Posterior vena cava (tissue), 2 donors: ENCODE measurements at regions of chr19 and their contacts with region 1.

Region 1: GRCh38 chr19:19145684-19146608 is 7.7 kb upstream of the TMEM161A start:
- DNase-seq: peak; percentile 93

Region 2: DNA sequence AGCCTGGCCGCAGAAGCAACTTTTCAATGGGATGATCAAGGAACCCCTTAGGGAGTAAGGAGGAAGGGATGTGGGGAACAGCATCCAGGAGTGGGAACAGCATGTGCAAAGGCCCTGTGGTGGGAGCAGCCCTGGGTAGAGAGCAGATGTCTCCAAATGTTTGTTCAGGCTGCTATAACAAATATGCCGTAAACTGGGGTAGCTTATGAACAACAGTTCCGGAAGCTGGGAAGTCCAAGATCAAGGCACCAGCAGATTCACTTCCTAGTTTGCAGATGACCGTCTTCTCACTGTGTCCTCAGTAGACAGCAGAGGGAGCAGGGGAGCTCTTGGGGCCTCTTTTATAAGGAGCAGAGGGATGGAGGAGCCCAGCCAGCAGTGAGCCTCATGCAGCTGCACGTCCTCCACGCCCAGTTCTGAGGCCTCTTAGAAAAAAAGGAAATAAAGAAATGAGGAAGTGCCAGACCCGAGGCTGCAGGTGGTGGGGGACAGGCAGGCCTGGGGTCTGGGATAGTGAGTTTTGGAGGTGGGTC is 744.3 kb before region 1 on chr19:
- intact Hi-C with region 1: no loop called
- DNase-seq: peak; percentile 92

Region 3: DNA sequence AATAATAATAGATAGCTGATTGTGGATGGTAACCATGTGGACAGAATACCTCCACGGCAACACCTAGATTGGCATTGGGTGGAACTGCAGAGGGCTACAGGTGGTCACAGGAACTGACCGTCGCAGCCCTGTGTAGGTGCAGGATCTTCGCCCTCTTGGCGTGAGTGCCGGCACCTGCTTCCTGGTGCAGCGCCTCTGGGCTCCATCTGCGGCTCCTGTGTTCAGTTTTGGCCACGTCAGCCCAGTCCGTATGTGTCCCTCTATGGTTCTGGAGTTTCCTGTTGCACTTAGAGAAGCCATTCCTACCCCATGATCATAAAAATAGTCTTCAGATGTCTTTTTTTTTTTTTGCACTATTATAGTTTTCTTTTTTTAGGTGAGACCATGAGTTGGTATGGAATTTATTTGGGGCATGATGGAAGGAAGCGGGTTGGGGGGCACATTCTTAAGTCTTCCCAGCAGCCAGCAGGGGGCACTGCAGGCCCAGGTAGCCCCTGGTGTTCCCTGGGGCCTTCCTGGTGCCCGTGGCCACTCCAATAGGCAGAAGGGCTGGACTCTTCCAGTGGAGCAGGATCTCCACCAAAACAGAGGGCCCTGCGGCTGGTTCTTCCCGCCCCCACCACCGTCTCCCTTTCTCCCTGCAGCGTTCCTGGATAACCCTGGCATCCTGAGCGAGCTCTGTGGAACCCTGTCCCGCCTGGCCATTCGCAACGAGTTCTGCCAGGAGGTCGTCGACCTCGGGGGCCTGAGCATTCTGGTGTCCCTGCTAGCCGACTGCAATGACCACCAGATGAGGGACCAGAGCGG is 92.2 kb before region 1 on chr19:
- intact Hi-C with region 1: loop called in 1 of 2 experiments (anchors 10 kb)
- DNase-seq: no peak